Activated T-helper 1 cell treated with anti-CD3 and anti-CD28 coated beads, Interleukin-12 subunit alpha, Interleukin-12 subunit beta, Interleukin-2, Interleukin-4 antibody, amounts not matched to agents 30 ng/mL and 10 ng/mL and 1 ng/mL, durations not matched to agents 14 hours and 24 hours and 36 hours (primary cell): ENCODE measurements at regions of chr4 and their contacts with region 1.

Region 1: DNA sequence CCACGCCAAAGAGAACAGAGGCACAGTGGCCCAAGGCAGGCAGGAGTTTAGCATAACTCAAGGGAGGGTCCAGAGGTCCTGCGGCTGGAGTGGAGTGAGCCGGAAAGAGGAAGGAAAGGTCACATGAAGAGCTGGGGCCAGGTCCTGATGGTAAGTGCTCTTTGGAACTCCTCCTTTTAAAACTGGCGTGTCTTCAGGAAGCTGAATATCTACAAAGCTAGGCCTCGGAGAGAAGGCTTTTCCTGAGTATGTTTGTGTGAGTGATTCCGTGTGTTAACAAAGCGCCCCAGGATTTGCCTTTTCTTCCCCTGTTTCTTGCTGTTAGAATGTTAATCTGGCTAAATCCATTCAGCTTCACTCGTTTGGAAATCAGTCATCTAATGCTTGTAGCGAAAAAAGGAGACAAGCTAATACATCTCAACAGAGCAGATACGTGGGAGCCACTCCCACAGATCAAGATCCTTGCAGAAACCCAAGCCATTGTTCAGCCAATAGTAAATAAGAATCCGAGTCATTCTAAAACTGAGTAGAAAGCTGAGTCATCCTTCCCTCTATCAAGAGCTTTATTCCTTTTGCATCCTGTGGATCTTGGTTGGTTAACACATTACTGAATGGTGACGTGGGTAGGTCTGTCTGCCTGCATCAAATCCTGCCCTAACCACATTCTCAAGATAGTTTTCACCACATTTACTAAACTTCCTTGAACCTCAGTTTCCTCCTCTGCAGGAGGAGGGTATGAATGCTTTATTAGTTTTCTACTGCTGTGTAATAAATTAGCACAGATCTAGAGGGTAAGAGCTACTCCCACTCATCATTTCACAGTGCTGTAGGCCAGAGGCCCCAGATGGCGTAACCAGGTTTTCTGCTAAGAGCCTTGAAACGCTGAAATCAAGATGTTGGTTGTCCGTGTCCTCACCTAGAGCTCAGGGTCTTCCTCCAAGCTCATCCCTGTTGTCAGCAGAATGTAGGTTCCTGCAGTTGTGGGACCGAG is 43.2 kb upstream of the RBM47 start:
- DNase-seq: peak; percentile 59
- H3K4me3 Mint-ChIP-seq: peak overlapping the region; percentile 57
- H3K27ac Mint-ChIP-seq: peak overlapping the region; percentile 86
- H3K4me1 Mint-ChIP-seq: peaks cover 68% of the 10 kb centered on the region
- H3K27me3 Mint-ChIP-seq: no peaks in the 10 kb centered on the region

Region 2: GRCh38 chr4:40515398-40516293 is 157.2 kb before region 1 on chr4:
- intact Hi-C with region 1: loop called (anchors 1 kb)
- DNase-seq: no peak
- H3K4me3 Mint-ChIP-seq: no peak overlapping the region
- H3K27ac Mint-ChIP-seq: peak overlapping the region; percentile 74
- H3K4me1 Mint-ChIP-seq: peaks cover 42% of the 10 kb centered on the region
- H3K27me3 Mint-ChIP-seq: peaks cover 3% of the 10 kb centered on the region

Region 3: GRCh38 chr4:40576631-40577480 is 96.0 kb before region 1 on chr4:
- intact Hi-C with region 1: loop called (anchors 1 kb)
- DNase-seq: no peak
- H3K4me3 Mint-ChIP-seq: peak overlapping the region; percentile 35
- H3K27ac Mint-ChIP-seq: peak overlapping the region; percentile 74
- H3K4me1 Mint-ChIP-seq: peaks cover 57% of the 10 kb centered on the region
- H3K27me3 Mint-ChIP-seq: peaks cover 2% of the 10 kb centered on the region

Region 4: DNA sequence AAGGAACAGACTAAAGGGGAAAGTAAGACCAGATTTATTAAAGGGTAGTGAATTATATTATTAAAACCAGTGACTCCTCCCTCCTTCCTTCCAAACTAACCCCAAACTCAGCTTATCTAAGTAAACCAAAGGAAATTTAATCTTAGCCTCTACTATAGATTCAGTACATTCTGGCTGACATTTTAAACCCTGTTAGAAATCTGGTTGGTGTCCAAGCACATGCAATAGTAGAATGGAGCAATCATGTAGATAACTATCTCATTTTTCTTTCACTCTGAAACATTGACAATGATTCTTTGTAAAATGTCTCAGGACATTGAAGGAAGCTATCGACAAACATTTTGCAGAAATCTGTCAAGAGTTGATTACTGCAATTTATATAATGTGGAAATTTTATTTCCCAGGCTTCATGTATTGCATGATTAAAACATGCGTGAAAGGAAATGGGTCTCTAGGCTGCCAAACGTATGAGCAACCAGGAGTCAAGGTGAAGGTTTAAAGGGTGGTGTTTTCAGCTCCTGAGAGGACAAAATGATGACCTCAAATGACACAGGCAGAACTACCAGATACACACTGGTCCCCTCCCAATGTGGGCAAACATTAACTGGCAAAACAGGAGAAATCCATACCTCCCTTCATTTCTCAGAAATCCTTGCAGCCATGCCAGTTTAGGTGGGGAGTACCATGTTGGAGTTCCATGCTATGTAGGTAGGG is 15.0 kb after region 1 on chr4:
- intact Hi-C with region 1: loop called (anchors 1 kb)
- DNase-seq: no peak
- H3K4me3 Mint-ChIP-seq: peak overlapping the region; percentile 56
- H3K27ac Mint-ChIP-seq: peak overlapping the region; percentile 97
- H3K4me1 Mint-ChIP-seq: peaks cover 27% of the 10 kb centered on the region
- H3K27me3 Mint-ChIP-seq: peaks cover 2% of the 10 kb centered on the region

Region 5: GRCh38 chr4:40763228-40763716 is 90.4 kb after region 1 on chr4:
- intact Hi-C with region 1: loop called (anchors 1 kb)
- DNase-seq: peak; percentile 55
- H3K4me3 Mint-ChIP-seq: peak overlapping the region; percentile 40
- H3K27ac Mint-ChIP-seq: peak overlapping the region; percentile 3
- H3K4me1 Mint-ChIP-seq: peaks cover 11% of the 10 kb centered on the region
- H3K27me3 Mint-ChIP-seq: no peaks in the 10 kb centered on the region